Activated CD8-positive, alpha-beta memory T cell treated with anti-CD3 and anti-CD28 coated beads, Interleukin-2, amount 10 ng/mL, durations not matched to agents 7 days and 5 days (primary cell): ENCODE measurements at regions of chr1 and their contacts with region 1.

Region 1: GRCh38 chr1:153572569-153573015 is 6.9 kb upstream of the S100A2 start:
- DNase-seq: peak; percentile 73
- ATAC-seq: peak; percentile 79
- H3K4me3 Mint-ChIP-seq: no peak overlapping the region
- H3K27ac Mint-ChIP-seq: peak overlapping the region; percentile 42
- H3K4me1 Mint-ChIP-seq: peaks cover 32% of the 10 kb centered on the region
- H3K27me3 Mint-ChIP-seq: peaks cover 19% of the 10 kb centered on the region

Region 2: DNA sequence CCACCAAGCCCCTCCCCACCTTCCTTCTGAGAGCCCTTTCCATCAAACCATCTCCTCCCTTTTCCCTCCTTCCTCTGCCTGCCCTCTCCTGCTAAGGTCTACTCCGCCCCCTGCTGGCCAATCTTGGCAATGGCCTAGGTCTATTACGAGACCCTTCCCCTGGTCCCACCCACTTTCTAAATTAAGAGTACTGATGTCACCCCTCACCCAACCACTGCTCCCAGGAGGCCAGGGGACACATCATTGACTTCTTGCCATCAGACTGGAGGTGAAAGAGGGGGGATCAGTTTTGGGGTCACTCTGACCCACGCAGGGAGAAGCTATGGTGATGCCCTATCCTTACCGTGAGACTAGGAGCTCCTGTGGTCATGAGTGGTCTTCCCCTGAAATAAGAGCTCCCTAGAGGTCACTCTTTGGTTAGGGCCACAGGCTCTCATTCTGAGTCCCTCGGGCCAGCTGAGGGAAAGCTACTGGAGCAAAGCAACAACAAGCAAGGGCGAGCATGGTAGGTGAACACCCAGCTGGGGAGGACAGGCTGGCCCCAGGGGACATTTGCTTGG is 77.5 kb before region 1 on chr1:
- CTCF ChIA-PET with region 1: interaction called, 11 read pairs
- DNase-seq: peak; percentile 78
- ATAC-seq: peak; percentile 76
- H3K4me3 Mint-ChIP-seq: no peak overlapping the region
- H3K27ac Mint-ChIP-seq: no peak overlapping the region
- H3K4me1 Mint-ChIP-seq: no peaks in the 10 kb centered on the region
- H3K27me3 Mint-ChIP-seq: peaks cover 31% of the 10 kb centered on the region

Region 3: DNA sequence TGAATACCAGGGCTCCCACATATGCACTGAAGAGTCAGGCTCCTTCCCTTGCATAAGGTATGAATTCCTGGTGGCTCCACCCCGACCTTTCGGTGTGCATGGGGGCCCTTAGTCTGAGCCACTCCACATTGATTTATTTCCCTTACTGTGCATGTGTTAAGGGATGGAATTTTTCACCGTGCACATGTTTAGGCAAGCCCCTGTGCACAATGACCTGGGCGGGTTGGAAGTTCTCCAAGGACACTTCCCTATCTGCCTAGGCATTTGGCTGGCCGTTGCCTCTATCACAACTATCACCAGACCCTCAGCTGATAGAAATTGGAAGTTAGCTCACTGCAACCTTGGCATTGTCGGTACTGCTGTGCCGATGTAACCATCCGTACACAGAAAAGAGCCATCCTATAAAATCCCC is 46.5 kb before region 1 on chr1:
- CTCF ChIA-PET with region 1: interaction called, 214 read pairs
- DNase-seq: no peak
- ATAC-seq: no peak
- H3K4me3 Mint-ChIP-seq: no peak overlapping the region
- H3K27ac Mint-ChIP-seq: no peak overlapping the region
- H3K4me1 Mint-ChIP-seq: peaks cover 13% of the 10 kb centered on the region
- H3K27me3 Mint-ChIP-seq: no peaks in the 10 kb centered on the region

Region 4: DNA sequence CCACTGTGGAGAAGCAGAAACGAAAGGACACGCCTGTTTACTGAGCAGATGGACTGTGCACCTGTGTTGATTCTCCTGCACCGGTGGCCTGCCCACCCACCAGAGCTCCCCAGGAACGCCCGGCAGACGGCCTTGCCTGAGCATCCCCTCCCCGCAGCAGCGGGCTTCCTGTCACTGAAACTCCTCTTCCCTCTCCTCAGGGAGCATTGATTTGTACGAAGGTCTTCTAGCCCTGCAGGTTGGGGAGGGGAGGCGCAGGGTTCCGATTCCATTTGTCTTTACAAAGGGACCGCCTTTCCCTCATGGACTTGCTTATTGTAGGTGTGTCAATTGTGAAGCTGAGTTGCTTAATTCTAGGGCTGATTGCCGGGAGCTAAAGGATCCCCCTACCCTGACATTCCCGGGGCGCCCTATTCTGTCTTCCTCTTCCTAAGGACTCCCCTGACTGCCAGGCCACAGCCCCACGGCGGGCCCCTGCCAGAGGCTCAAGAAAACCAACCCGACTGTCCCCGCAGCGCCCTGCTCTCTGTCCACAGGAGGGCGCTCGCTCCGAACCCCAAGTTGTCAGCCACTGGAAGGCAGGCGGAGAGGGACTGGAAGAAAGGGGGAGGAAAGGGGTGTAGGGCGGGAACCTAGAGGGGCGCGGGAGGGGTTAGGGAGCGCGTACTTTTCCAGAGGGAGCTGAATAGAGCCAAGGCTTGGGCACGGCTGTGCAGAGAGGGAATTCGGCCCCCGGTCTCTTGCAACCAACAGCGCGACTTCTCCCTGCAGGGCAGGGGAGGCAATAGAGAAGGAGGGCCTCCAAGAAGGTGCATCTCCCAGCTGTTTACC is 39.6 kb before region 1 on chr1:
- CTCF ChIA-PET with region 1: interaction called, 214 read pairs
- DNase-seq: peak; percentile 89
- ATAC-seq: peak; percentile 32
- H3K4me3 Mint-ChIP-seq: peak overlapping the region; percentile 97
- H3K27ac Mint-ChIP-seq: peak overlapping the region; percentile 95
- H3K4me1 Mint-ChIP-seq: peaks cover 62% of the 10 kb centered on the region
- H3K27me3 Mint-ChIP-seq: no peaks in the 10 kb centered on the region

Region 5: GRCh38 chr1:153545067-153546055 is 27.2 kb before region 1 on chr1 and contains the start of gene S100A4:
- CTCF ChIA-PET with region 1: interaction called, 24 read pairs
- DNase-seq: peak; percentile 97
- ATAC-seq: peak; percentile 85
- H3K4me3 Mint-ChIP-seq: peak within 1 kb of the TSS; percentile 96
- H3K27ac Mint-ChIP-seq: peak within 1 kb of the TSS; percentile 97
- H3K4me1 Mint-ChIP-seq: peaks cover 78% of the 10 kb centered on the region
- H3K27me3 Mint-ChIP-seq: peaks cover 3% of the 10 kb centered on the region
- total RNA-seq, gene S100A4: 898 to 906 TPM

Region 6: DNA sequence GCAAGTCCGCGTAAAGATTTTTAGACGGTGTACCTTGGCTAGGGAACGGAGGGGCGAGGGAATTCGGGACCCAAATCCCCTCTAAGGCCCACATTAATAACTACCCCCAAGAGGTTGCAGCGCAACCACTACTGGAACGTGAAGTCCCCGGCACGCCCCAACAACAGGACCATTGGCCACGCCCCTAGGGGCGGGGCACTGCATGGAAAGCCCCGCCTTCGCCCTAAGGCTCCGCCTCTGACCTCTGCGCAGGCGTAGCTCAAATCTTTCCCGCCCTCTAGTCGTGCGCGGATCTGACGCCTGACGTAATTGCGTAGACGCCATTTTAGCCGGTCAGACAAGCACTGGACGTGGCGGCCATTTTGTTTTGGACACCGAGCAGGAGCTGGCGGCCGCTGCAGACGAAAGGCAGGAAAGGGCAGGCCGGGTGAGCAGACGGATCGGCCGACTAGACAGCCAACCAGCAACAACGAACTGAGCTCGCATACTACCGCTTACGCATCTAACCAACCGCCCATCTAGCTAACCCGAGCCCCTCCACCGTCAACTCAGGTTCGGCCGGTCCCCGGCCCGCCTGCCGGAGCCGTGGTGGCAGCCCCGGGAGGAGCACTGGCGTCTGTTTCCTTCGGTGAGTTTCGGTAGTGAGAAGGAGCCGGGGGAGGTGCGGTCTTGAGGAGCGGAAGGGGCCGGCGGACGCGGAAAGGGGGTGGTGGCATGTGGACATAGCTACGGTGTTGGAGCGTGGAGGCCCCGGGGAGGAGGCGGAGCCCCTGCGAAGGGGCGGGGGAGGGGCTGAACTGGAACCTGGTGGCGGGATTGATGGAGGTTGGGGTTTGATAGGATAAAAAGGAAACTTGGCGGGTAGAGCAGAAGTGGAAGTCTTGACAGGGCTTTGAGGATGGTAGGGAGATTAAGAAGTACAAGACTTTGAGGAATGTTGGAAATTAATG is 61.4 kb after region 1 on chr1 and contains the start of gene CHTOP:
- CTCF ChIA-PET with region 1: interaction called, 15 read pairs
- DNase-seq: peak; percentile 99
- ATAC-seq: peak; percentile 92
- H3K4me3 Mint-ChIP-seq: peak within 1 kb of the TSS; percentile 99
- H3K27ac Mint-ChIP-seq: peak within 1 kb of the TSS; percentile 100
- H3K4me1 Mint-ChIP-seq: peaks cover 42% of the 10 kb centered on the region
- H3K27me3 Mint-ChIP-seq: no peaks in the 10 kb centered on the region
- total RNA-seq, gene CHTOP: 83.8 to 89.1 TPM

Region 7: GRCh38 chr1:153646672-153647374 is 74.2 kb after region 1 on chr1:
- CTCF ChIA-PET with region 1: no interaction called
- DNase-seq: no peak
- ATAC-seq: no peak
- H3K4me3 Mint-ChIP-seq: no peak overlapping the region
- H3K27ac Mint-ChIP-seq: peak overlapping the region; percentile 63
- H3K4me1 Mint-ChIP-seq: peaks cover 33% of the 10 kb centered on the region
- H3K27me3 Mint-ChIP-seq: no peaks in the 10 kb centered on the region

Region 8: DNA sequence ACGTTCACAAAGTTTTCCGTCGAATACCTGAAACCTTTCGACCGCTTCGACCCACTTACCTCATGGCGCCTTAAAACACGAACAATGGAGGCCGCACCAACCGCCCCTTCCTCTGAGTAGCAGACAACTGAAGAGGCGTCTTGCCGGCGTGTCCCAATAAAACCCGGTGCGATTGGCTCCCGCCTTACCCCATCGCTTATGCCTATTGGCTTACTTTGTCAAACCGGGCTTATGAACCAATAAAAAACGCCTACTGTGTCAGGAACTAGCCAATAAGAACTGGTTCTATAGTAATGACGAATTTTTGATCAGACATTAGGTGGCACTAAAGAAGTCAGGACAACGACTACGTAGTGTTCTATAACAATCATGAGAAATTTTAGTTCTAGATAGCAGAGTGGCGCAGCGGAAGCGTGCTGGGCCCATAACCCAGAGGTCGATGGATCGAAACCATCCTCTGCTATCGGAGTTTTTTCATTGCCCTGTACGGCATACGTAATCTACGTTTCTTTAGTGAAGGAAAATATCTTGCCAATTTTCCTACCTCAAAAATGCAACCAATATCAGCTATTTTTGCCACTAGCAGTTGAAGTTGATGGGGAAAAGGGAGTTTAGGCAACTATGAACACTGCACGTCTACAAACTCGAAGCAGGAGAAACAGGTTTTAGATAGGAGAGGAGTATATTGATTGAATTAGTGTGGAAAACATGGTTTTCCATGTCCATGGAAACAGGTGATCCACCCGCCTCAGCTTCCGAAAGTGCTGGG is 98.5 kb after region 1 on chr1 and contains the start of gene ILF2:
- CTCF ChIA-PET with region 1: interaction called, 10 read pairs
- DNase-seq: peak; percentile 99
- ATAC-seq: peak; percentile 91
- H3K4me3 Mint-ChIP-seq: no peak within 1 kb of the TSS
- H3K27ac Mint-ChIP-seq: no peak within 1 kb of the TSS
- H3K4me1 Mint-ChIP-seq: peaks cover 34% of the 10 kb centered on the region
- H3K27me3 Mint-ChIP-seq: no peaks in the 10 kb centered on the region
- total RNA-seq, gene ILF2: 193 to 260 TPM